ENCODE measurements at regions of chr12 and their contacts with region 1.

Region 1: DNA sequence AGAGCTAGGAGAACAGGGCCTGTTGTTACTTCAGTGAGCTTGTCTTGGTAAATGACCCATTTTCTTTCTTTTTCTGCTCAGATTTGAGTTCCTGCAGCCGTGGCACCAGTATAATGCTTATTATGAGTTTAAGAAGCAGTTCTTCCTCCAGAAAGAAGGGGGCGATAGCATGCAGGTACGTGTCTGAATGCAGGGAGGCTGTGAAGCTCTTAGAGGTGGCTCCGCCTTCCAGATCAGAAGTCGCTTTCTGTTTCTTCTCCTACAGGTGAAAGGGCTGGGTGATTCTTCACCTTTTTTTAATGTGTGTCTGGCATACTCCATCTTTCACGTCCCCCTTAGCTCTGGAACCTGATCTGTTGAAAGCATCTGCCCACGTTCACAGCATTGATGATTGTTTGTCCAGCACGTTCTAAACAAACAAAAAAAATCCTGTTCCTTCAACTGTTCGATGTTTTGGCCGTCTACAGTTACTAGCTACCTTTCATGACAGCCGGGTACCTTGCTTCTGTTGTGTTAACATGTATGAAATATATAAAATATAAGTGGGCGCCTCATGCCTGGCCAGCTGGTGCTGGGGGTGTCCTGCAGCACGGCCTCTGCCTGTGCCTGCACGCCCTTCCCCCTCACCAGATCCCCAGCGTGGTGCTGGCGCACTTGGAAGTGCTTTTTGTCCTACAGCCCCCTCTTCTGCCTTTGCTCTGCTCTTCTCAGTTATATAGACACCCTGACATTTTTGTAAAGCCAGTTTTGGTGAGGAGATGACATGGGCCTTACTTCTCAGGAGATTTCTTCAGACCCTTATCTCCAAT is 44.6 kb downstream of the SFSWAP start:
- DNase-seq: peak; percentile 46
- H3K4me3 Mint-ChIP-seq: no peak overlapping the region
- H3K27ac Mint-ChIP-seq: no peak overlapping the region
- H3K4me1 Mint-ChIP-seq: no peaks in the 10 kb centered on the region
- H3K27me3 Mint-ChIP-seq: no peaks in the 10 kb centered on the region

Region 2: GRCh38 chr12:131737142-131737827 is 18.2 kb before region 1 on chr12:
- CTCF ChIA-PET with region 1: interaction called, 19 read pairs
- POLR2A ChIA-PET with region 1: interaction called, 3 read pairs
- intact Hi-C with region 1: no loop called
- DNase-seq: no peak
- H3K4me3 Mint-ChIP-seq: no peak overlapping the region
- H3K27ac Mint-ChIP-seq: no peak overlapping the region
- H3K4me1 Mint-ChIP-seq: peaks cover 2% of the 10 kb centered on the region
- H3K27me3 Mint-ChIP-seq: no peaks in the 10 kb centered on the region

Region 3: GRCh38 chr12:132018193-132018916 is 262.8 kb after region 1 on chr12:
- CTCF ChIA-PET with region 1: no interaction called
- POLR2A ChIA-PET with region 1: no interaction called
- intact Hi-C with region 1: loop called (anchors 10 kb)
- DNase-seq: no peak
- H3K4me3 Mint-ChIP-seq: no peak overlapping the region
- H3K27ac Mint-ChIP-seq: no peak overlapping the region
- H3K4me1 Mint-ChIP-seq: no peaks in the 10 kb centered on the region
- H3K27me3 Mint-ChIP-seq: no peaks in the 10 kb centered on the region

Region 4: DNA sequence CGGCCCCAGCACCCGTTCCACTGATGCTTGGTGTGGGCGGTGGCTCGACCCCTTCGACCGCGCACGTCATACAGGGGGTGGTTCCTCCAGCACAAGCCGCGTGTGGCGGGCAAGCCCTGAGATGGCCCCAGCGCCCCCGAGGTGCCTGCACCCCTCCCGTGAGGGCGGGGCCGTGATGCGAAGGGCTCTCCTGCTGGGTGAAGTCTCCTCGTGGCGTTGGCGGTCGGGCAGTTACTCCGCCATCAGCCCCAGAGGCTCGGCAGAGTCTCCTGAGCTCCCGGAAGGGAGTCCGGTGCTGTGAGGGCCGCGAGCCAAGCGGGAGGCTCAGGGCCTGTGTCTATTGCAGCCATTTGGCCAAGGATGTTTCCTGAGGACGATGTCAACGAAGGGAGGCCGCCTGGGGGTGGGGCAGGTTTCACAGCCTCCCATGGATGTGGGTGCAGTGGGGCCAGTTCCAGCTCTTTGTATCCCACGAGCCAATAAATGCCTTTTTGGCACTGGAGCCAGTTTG is 652.0 kb after region 1 on chr12:
- CTCF ChIA-PET with region 1: no interaction called
- POLR2A ChIA-PET with region 1: no interaction called
- intact Hi-C with region 1: no loop called
- DNase-seq: no peak
- H3K4me3 Mint-ChIP-seq: no peak overlapping the region
- H3K27ac Mint-ChIP-seq: no peak overlapping the region
- H3K4me1 Mint-ChIP-seq: no peaks in the 10 kb centered on the region
- H3K27me3 Mint-ChIP-seq: peaks cover 7% of the 10 kb centered on the region